Spleen (tissue), 13 donors: ENCODE measurements at regions of chr4 and their contacts with region 1.

Region 1: DNA sequence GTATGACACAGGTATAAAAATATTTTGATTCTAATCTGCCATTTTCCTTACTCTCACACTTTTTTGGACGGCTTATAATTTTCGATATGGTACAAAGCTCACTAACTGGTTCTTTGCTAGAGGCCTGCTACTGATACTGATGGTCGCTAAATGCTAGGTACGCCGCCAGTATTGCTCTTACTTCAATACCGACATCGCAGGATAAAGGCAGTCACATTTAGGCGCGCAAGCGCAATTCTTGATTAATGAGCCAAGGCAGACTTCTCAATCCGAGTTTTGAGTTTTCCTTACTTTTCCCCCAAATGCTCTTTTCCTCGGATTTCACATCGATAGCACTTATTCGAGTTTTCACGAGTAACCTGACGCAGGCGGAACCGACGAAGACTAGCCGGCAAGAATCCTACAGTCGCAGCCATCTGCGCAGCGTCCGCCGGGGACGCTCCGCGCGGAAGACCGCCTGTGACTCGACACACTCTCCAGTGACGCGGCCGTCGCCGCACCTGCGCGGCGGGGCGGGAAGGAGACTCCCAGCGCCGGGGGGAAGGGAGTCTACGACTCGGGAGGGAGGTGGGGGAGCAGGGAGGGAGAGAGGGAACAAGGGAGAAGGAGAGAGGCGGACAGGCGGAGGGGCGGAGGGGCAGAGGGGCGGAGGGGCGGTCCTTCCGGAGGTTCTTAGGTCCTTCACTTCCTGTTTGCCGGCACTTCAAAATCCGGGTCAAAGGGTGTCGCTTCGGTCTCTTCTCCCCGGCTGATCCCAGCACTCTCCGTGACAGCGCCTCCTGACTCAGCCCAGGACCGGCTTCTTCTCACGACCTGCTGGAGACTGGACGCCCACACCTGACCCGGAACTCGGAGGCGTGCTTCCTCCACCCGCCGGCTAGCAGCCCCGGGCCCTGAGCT is at the start of gene USP38:
- DNase-seq: peak; percentile 95
- H3K4me3 ChIP-seq: peak within 1 kb of the TSS; percentile 59 to 94 (median 86)
- H3K27ac ChIP-seq: peak within 1 kb of the TSS; percentile 92 to 98 (median 96)
- H3K4me1 ChIP-seq: peaks cover 25 to 68% (median 57%) of the 10 kb centered on the region in 6 donors
- H3K27me3 ChIP-seq: no peaks in the 10 kb centered on the region
- CTCF ChIP-seq: peak in 2 of 11 experiments; percentile 12 to 18
- POLR2A ChIP-seq: peak in 1 of 3 donors; percentile 60
- total RNA-seq, gene USP38: 23.8 to 37.3 (median 26.9) TPM

Region 2: DNA sequence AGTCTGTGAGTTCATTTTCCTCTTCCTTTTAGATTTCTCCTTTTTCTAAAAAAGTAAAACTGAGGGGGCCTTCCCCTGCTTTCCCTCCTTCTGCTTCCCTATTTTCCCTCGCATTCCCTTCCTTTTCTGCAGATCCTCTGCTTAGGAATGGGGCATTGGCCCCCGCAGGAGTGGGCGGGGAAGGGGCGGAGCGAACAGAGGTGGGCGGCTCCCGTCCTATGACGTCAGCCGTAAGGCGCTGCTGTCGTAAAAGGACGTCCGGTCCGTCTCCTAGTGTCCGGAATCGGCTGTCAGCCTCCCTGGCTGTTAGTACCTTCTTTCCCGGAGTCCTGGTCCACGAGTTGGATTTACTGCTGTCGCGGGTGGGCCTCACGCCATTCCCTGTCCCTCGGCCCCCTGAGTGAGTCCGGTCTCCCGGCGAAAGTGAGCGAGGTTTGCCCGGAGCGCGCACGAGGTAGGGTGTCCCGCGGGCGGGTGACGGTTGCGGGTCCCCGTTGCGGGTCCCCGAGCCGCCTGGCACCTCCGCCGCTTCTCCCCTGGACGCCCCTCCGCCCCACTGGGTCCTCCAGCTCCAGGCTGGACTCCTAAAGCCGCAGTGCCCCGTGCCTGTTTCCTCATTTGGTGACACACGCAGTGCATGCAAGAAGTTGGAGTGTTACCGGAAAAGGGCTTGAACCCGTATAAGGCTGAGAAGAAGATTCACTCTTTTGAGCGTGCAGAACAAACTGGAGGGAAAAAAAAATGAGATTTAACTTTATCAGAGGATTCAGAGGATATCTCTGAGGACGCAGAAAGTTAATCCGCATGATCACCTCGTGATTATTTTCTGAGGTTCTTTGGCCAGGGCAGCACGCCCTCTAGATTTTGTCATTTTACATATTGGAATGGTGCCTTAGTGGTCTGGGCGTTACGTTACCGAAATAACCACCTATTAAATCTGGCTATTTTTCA is 1963.5 kb before region 1 on chr4 and contains the start of gene ZNF330:
- intact Hi-C with region 1: loop called (anchors 10 kb)
- DNase-seq: peak; percentile 96
- H3K4me3 ChIP-seq: peak within 1 kb of the TSS; percentile 73 to 96 (median 88)
- H3K27ac ChIP-seq: peak within 1 kb of the TSS; percentile 89 to 98 (median 96)
- H3K4me1 ChIP-seq: peaks cover 6 to 46% (median 31%) of the 10 kb centered on the region in 6 donors
- H3K27me3 ChIP-seq: no peaks in the 10 kb centered on the region
- CTCF ChIP-seq: peak in 2 of 11 experiments; percentile 4 to 12
- POLR2A ChIP-seq: peak; percentile 60 to 77 (median 77)
- total RNA-seq, gene ZNF330: 31.3 to 45.0 (median 36.6) TPM

Region 3: GRCh38 chr4:142940425-142941330 is 243.8 kb before region 1 on chr4:
- intact Hi-C with region 1: no loop called
- DNase-seq: no peak
- H3K4me3 ChIP-seq: no peak overlapping the region
- H3K27ac ChIP-seq: no peak overlapping the region
- H3K4me1 ChIP-seq: no peaks in the 10 kb centered on the region
- H3K27me3 ChIP-seq: peaks cover 0 to 3% (median 0%) of the 10 kb centered on the region in 7 donors
- CTCF ChIP-seq: no peak
- POLR2A ChIP-seq: no peak

Region 4: GRCh38 chr4:143046454-143046853 is 138.0 kb before region 1 on chr4:
- intact Hi-C with region 1: no loop called
- DNase-seq: no peak
- H3K4me3 ChIP-seq: no peak overlapping the region
- H3K27ac ChIP-seq: no peak overlapping the region
- H3K4me1 ChIP-seq: no peaks in the 10 kb centered on the region
- H3K27me3 ChIP-seq: no peaks in the 10 kb centered on the region
- CTCF ChIP-seq: no peak
- POLR2A ChIP-seq: no peak

Region 5: DNA sequence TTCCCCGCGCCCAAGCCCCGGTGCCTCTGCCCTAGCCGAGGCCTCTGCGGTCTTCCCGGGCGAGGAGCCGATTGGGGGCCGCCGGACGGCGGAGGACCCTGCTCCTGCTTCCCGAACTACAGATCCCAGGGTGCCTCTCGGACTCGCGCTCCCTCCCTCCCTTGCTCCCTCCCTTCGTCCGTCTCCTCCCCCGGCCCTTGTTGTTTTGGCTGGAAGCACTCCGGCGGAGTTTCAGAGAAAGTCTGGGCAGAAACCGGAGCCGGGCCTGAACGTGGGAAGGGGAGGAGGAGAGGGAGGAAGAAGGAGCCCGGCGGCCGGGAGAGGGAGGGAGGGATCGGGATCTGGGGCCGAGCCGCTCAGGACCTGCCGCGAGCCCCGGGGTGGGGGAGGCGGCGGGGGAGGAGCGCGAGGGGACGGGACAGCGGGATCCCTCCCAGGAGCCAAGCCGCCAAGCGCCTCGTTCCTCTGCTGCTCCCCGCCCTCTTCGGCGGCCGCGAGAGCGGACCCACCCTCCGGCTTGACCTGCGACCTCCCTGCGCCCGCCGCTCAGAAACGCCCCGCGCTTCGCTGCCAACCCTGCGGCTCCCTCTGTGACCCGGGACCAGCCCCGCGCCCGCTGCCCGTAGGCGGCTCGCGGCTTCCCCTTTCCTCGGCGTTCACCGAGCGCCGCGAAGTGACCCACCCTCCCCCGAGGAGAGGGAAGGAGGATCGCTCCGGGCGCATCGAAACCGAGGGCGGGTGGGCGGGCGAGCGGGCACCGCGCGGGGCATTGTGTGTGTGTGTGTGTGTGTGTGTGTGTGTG is 151.7 kb after region 1 on chr4:
- intact Hi-C with region 1: loop called (anchors 10 kb)
- DNase-seq: peak; percentile 95
- H3K4me3 ChIP-seq: peak overlapping the region; percentile 79 to 98 (median 82)
- H3K27ac ChIP-seq: peak overlapping the region; percentile 81 to 98 (median 94)
- H3K4me1 ChIP-seq: peaks cover 0 to 59% (median 19%) of the 10 kb centered on the region in 6 donors
- H3K27me3 ChIP-seq: peaks cover 0 to 34% (median 0%) of the 10 kb centered on the region in 7 donors
- CTCF ChIP-seq: no peak
- POLR2A ChIP-seq: no peak